Endothelial cell of umbilical vein (primary cell): ENCODE measurements at regions of chr1 and their contacts with region 1.

Region 1: DNA sequence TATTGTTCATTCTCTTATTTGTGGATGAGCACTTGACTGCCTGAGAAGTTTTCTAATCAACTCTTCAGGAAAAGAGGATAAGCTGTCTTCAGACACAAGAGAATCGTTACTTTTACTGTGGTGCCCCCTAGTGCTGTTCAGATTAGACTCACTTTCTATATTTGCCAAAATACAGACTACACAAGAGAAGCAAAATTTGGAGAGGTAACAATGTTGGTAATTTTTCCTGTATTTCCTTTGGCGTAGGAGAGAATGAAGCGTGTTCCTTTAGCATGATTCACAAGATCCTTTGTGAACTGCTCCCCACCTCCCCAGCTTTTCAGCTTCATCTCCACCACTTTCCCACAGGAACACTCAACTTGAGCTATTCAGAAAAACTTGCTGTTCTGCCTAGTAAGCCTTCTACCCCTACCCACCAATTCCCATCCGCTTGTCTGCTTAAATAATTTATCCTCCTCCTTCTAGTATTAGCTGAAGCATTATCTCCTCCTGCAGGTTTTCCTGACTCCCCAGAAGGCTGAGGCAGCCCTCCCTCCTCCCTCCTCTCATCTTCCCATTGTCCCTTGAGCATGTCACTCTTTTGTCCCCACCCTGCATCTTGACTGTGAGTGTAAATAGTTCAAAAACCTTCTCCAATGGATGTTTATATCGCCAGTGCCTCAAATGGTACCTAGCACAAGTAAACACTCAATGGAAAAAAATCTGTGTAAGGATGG is 4.5 kb downstream of the TNFSF4 start:
- DNase-seq: peak; percentile 90
- H3K4me3 ChIP-seq: peak overlapping the region; percentile 9 to 98 (median 91)
- H3K27ac ChIP-seq: peak overlapping the region; percentile 87
- H3K4me1 ChIP-seq: peaks cover 47% of the 10 kb centered on the region
- H3K27me3 ChIP-seq: no peaks in the 10 kb centered on the region
- CTCF ChIP-seq: peak; percentile 39 to 59
- POLR2A ChIP-seq: no peak

Region 2: DNA sequence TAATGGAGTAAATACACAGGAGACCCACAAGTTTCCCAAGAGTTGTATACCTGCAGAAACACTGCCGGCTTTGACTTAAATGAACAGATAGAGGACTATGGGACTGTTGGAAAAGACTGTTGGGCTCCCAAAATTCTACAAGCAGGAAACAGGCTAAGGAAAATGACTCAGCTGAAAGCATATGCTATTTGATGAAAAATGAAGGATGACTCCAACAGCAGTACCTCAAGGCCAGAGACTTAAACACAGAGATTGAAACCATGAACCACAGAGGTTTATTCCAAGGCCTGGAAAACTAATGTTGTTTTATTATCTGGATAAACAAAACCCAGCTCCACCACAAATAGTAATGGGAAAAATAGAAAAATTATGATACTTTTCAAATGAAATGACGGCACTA is 339.6 kb before region 1 on chr1:
- CTCF ChIA-PET with region 1: interaction called, 14 read pairs
- POLR2A ChIA-PET with region 1: no interaction called
- dilution Hi-C with region 1: no loop called
- intact Hi-C with region 1: loop called (anchors 1 kb)
- DNase-seq: no peak
- H3K4me3 ChIP-seq: no peak overlapping the region
- H3K27ac ChIP-seq: no peak overlapping the region
- H3K4me1 ChIP-seq: peaks cover 17% of the 10 kb centered on the region
- H3K27me3 ChIP-seq: no peaks in the 10 kb centered on the region
- CTCF ChIP-seq: no peak
- POLR2A ChIP-seq: no peak

Region 3: DNA sequence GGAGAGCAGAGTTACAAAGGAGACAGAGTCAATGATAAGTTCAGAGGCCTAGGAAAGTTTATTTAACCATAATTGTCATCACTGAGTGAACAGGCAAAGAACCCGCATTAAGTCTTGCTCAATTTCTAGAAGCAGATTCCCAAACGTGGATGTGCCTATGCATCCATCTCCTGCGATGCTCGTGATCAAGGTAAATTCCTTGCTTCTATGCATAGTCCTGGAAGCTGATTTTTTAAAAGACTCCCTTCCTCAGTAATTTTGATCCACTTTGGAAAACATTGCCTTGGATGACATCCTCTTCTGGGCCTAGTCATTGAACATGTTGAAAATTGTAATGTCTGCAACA is 268.2 kb before region 1 on chr1:
- CTCF ChIA-PET with region 1: interaction called, 11 read pairs
- POLR2A ChIA-PET with region 1: interaction called, 3 read pairs
- dilution Hi-C with region 1: no loop called
- intact Hi-C with region 1: loop called (anchors 1 kb)
- DNase-seq: no peak
- H3K4me3 ChIP-seq: no peak overlapping the region
- H3K27ac ChIP-seq: peak overlapping the region; percentile 90
- H3K4me1 ChIP-seq: peaks cover 53% of the 10 kb centered on the region
- H3K27me3 ChIP-seq: no peaks in the 10 kb centered on the region
- CTCF ChIP-seq: no peak
- POLR2A ChIP-seq: no peak

Region 4: DNA sequence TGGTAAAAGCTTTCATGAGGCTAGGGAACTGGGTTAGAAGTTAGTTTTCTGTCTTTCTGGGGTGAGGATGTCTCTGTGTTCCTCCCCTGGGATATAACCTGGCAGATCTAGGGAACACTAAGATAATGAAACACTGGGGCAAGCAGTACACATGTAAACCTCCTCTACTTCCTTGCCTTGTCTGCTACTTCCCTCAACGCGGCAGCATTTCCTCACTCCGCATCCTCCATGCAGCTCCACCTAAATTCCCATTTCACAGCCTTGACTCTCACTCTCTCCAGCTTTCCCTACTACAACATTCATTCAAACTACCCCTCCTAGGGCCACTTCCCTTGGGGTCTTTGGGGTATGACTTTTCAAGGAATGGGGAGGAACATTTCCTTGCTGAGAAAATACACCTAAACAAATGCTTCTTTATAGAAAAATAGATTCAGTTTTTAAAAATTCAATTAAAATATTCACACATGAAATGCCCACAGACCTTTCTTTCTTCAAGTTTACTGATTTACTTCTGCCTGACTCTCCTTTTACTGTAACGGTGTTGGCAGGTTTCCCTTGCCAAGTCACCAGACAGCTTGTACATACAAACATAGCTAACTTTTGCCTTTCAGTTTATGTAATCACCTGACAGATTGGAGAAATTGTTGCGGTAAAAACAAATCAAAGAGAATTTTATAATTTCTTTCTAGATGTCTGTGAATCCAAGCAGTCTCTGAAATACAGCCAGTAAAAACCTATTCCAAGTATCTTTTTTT is 242.0 kb before region 1 on chr1:
- CTCF ChIA-PET with region 1: interaction called, 12 read pairs
- POLR2A ChIA-PET with region 1: interaction called, 3 read pairs
- dilution Hi-C with region 1: loop called (anchors 25 kb)
- intact Hi-C with region 1: loop called (anchors 1 kb)
- DNase-seq: no peak
- H3K4me3 ChIP-seq: no peak overlapping the region
- H3K27ac ChIP-seq: peak overlapping the region; percentile 10
- H3K4me1 ChIP-seq: peaks cover 31% of the 10 kb centered on the region
- H3K27me3 ChIP-seq: no peaks in the 10 kb centered on the region
- CTCF ChIP-seq: peak in 1 of 2 donors; percentile 13
- POLR2A ChIP-seq: no peak

Region 5: DNA sequence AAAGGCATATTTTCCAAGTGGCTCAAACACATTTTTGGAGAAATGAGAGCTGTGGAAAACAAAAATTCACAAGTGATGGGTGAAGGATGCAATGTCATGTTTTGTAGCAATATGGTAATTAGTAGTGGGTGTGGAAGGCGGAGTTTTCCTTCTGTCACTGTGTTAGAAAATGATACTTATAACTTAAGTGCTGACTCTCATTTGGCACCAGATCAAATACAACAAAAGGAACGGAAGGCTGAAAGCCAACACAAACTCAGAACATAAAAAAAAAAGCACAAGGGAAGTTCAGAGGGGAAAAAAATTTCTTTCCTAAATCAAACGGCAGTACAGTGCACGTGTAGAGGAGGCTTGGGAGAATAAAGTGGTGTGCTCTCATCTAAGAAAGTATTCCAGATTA is 151.7 kb before region 1 on chr1 and contains the start of gene TNFSF18:
- CTCF ChIA-PET with region 1: interaction called, 11 read pairs
- POLR2A ChIA-PET with region 1: interaction called, 4 read pairs
- dilution Hi-C with region 1: no loop called
- intact Hi-C with region 1: loop called (anchors 1 kb)
- DNase-seq: peak; percentile 96
- H3K4me3 ChIP-seq: peak within 1 kb of the TSS in 2 of 3 experiments; percentile 1 to 63
- H3K27ac ChIP-seq: peak within 1 kb of the TSS; percentile 54
- H3K4me1 ChIP-seq: peaks cover 52% of the 10 kb centered on the region
- H3K27me3 ChIP-seq: no peaks in the 10 kb centered on the region
- CTCF ChIP-seq: no peak
- POLR2A ChIP-seq: no peak
- total RNA-seq, gene TNFSF18: 39.4 and 39.9 TPM in 2 replicates

Region 6: GRCh38 chr1:173409613-173410012 is 207.0 kb after region 1 on chr1:
- CTCF ChIA-PET with region 1: no interaction called
- POLR2A ChIA-PET with region 1: no interaction called
- dilution Hi-C with region 1: no loop called
- intact Hi-C with region 1: loop called (anchors 5 kb)
- DNase-seq: peak; percentile 64
- H3K4me3 ChIP-seq: no peak overlapping the region
- H3K27ac ChIP-seq: no peak overlapping the region
- H3K4me1 ChIP-seq: peaks cover 4% of the 10 kb centered on the region
- H3K27me3 ChIP-seq: no peaks in the 10 kb centered on the region
- CTCF ChIP-seq: no peak
- POLR2A ChIP-seq: no peak

Region 7: GRCh38 chr1:173824331-173825081 is 621.9 kb after region 1 on chr1 and contains the starts of genes CENPL and DARS2:
- CTCF ChIA-PET with region 1: no interaction called
- POLR2A ChIA-PET with region 1: no interaction called
- dilution Hi-C with region 1: no loop called
- intact Hi-C with region 1: loop called (anchors 1 kb)
- DNase-seq: peak; percentile 98
- H3K4me3 ChIP-seq: peak within 1 kb of the TSS; percentile 87 to 92 (median 87)
- H3K27ac ChIP-seq: peak within 1 kb of the TSS; percentile 92
- H3K4me1 ChIP-seq: peaks cover 15% of the 10 kb centered on the region
- H3K27me3 ChIP-seq: no peaks in the 10 kb centered on the region
- CTCF ChIP-seq: no peak
- POLR2A ChIP-seq: peak; percentile 85
- total RNA-seq, gene CENPL: 19.0 and 20.8 TPM in 2 replicates
- total RNA-seq, gene DARS2: 30.5 and 33.6 TPM in 2 replicates